ENCODE measurements at regions of chr3 and their contacts with region 1.

Region 1: DNA sequence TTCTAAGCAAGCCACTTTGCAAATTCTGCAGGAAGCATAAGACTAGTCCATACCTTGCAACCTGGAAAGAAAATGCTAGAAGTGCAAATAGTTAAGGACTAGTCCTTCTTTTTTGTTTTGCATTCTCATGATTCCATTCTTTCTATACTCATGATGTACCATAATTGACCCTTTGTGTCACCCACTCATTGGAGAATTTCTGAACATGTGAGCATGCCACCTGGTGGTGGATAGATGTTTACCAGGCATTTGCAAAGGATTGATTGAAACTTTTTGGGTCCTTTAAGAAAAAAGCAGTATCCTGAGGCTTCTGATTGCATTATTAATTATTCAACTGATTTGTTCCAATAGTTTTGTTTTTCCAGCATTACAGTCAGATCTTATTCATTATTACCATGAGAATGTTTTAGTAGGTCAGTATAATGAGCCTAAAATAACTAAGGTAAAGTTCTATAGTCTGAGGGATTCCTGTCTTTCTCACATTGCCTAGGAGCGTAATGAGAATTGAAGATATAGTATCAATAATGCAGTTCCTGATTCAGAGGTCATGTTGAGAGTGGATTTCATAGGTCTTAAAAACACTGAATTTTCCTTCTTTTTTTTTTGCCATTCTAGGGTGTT is 20.2 kb upstream of the DIPK2A start:
- DNase-seq: peak; percentile 49
- H3K4me3 Mint-ChIP-seq: no peak overlapping the region
- H3K27ac Mint-ChIP-seq: no peak overlapping the region
- H3K4me1 Mint-ChIP-seq: no peaks in the 10 kb centered on the region
- H3K27me3 Mint-ChIP-seq: no peaks in the 10 kb centered on the region

Region 2: DNA sequence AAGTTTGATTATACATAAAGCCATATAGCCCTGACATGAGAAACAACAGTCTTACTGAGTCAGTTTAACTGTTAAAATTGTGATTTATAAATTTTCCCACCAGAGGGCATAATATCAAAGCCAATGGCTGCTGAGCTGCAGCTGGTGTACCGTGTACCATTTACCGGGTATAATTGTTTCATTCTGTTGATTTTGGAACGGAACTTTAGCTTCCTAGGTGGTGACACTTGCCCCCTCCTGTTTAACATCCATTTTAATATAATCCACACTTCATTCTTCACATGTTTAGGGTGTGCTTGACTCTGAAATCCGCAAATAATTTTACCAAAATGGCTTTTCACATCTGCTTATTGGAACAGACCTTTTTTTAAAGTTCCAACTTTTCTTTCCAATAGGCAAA is 176.0 kb before region 1 on chr3:
- CTCF ChIA-PET with region 1: interaction called, 9 read pairs
- POLR2A ChIA-PET with region 1: no interaction called
- intact Hi-C with region 1: loop called (anchors 1 kb)
- DNase-seq: no peak
- H3K4me3 Mint-ChIP-seq: no peak overlapping the region
- H3K27ac Mint-ChIP-seq: no peak overlapping the region
- H3K4me1 Mint-ChIP-seq: peaks cover 3% of the 10 kb centered on the region
- H3K27me3 Mint-ChIP-seq: no peaks in the 10 kb centered on the region